B cell (primary cell): ENCODE measurements at regions of chr12 and their contacts with region 1.

Region 1: GRCh38 chr12:116186482-116187150 is 90.9 kb downstream of the MED13L start:
- DNase-seq: no peak
- ATAC-seq: no peak
- H3K4me3 ChIP-seq: no peak overlapping the region
- H3K4me3 Mint-ChIP-seq: no peak overlapping the region
- H3K27ac ChIP-seq: no peak overlapping the region
- H3K27ac Mint-ChIP-seq: no peak overlapping the region
- H3K4me1 ChIP-seq: peaks cover 20 to 35% of the 10 kb centered on the region in 2 donors
- H3K4me1 Mint-ChIP-seq: peaks cover 64% of the 10 kb centered on the region
- H3K27me3 ChIP-seq: no peaks in the 10 kb centered on the region
- H3K27me3 Mint-ChIP-seq: no peaks in the 10 kb centered on the region
- CTCF ChIP-seq: no peak

Region 2: DNA sequence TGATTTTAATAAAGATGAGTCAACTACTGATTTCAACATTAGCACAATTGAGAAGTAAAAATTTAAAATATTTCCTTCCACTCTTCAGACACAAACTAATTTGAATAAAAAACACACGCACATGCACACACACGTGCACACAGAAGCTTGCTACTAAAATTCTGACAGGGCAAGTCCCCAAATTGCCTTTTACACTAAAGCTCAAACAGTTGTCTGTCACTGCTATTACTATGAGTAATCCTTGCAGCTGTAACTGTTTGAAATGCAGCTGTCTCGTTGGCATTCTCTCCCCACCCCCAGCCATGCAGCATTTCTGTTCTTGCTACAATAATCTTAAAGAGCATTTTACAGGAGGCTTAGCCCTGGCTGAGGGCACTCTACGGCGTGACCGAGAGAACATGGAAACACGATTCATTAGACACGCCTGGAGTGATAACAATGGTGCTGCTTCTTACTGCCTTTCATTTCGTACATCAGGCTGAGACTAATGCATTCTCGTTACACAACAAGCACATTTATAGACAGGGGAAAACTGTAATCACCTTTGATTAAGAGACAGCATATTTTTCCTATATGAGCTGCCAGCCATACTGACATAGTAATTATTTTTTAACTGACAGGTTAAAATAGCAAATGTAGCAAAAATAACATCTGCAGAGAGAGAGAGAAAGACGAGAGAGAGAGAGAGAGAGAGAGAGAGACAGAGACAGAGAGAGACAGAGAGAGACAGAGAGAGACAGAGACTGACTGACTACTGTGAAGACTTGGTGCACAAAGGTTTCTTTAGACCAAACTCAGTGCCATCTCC is 63.0 kb before region 1 on chr12:
- CTCF ChIA-PET with region 1: no interaction called
- POLR2A ChIA-PET with region 1: no interaction called
- intact Hi-C with region 1: loop called (anchors 5 kb)
- DNase-seq: peak; percentile 39
- ATAC-seq: peak; percentile 66
- H3K4me3 ChIP-seq: no peak overlapping the region
- H3K4me3 Mint-ChIP-seq: peak overlapping the region; percentile 60
- H3K27ac ChIP-seq: no peak overlapping the region
- H3K27ac Mint-ChIP-seq: peak overlapping the region; percentile 3
- H3K4me1 ChIP-seq: peaks cover 12 to 17% of the 10 kb centered on the region in 2 donors
- H3K4me1 Mint-ChIP-seq: peaks cover 65% of the 10 kb centered on the region
- H3K27me3 ChIP-seq: no peaks in the 10 kb centered on the region
- H3K27me3 Mint-ChIP-seq: no peaks in the 10 kb centered on the region
- CTCF ChIP-seq: no peak

Region 3: DNA sequence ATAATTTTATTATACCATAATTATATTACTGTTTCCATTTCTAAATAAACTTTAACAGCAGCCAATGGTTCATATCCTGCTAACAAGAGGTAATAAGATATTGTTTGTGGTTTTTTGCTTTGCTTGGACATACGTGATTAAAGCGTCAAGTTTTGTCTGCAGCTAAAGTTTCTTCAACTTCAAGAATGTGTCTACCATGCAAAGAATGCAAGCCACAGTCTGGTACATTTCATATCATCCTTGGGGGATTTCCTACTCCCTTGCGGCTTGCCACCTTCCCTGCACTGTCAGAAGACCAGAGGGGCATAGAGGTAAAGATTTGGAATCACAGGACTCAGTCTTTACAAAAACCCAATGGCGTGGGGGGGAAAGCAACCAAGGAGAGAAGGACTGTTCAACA is 34.3 kb before region 1 on chr12:
- CTCF ChIA-PET with region 1: no interaction called
- POLR2A ChIA-PET with region 1: no interaction called
- intact Hi-C with region 1: loop called (anchors 5 kb)
- DNase-seq: peak; percentile 25
- ATAC-seq: no peak
- H3K4me3 ChIP-seq: no peak overlapping the region
- H3K4me3 Mint-ChIP-seq: no peak overlapping the region
- H3K27ac ChIP-seq: no peak overlapping the region
- H3K27ac Mint-ChIP-seq: no peak overlapping the region
- H3K4me1 ChIP-seq: peaks cover 17 to 18% of the 10 kb centered on the region in 2 donors
- H3K4me1 Mint-ChIP-seq: peaks cover 54% of the 10 kb centered on the region
- H3K27me3 ChIP-seq: no peaks in the 10 kb centered on the region
- H3K27me3 Mint-ChIP-seq: no peaks in the 10 kb centered on the region
- CTCF ChIP-seq: no peak

Region 4: DNA sequence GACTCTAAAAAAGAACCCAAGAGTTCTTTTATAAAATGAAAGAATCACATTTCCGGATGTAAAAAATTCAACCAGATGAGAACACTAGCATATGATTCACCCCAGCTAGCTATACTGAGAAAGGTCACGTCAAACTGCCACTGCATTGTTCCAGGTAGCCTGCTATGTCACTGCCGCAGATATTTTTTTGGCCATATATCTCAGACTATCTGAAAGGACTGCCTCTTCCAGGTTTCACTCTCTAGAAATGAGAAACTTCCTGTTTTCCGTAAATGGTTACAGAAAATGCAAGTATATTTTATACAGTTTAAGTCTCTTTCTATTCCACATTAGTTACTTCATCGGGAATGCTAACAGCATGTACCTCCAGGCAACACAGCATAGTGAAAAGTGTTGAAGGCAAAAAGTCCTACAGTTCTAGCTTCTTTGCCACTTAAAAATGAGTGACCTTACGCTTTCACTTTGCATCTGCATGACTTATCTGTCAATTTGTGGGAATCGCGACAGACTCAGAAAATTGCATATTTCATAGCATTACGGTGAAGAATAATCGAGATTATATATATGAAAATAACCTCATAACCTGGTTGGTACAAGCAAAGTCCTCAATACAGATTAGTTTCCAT is 14.3 kb before region 1 on chr12:
- CTCF ChIA-PET with region 1: no interaction called
- POLR2A ChIA-PET with region 1: no interaction called
- intact Hi-C with region 1: loop called (anchors 2 kb)
- DNase-seq: peak; percentile 48
- ATAC-seq: peak; percentile 87
- H3K4me3 ChIP-seq: peak overlapping the region in 4 of 5 experiments; percentile 21 to 43 (median 32)
- H3K4me3 Mint-ChIP-seq: peak overlapping the region; percentile 80
- H3K27ac ChIP-seq: peak overlapping the region in 1 of 2 donors; percentile 40
- H3K27ac Mint-ChIP-seq: peak overlapping the region; percentile 47
- H3K4me1 ChIP-seq: peaks cover 17 to 23% of the 10 kb centered on the region in 2 donors
- H3K4me1 Mint-ChIP-seq: peaks cover 73% of the 10 kb centered on the region
- H3K27me3 ChIP-seq: no peaks in the 10 kb centered on the region
- H3K27me3 Mint-ChIP-seq: no peaks in the 10 kb centered on the region
- CTCF ChIP-seq: no peak

Region 5: DNA sequence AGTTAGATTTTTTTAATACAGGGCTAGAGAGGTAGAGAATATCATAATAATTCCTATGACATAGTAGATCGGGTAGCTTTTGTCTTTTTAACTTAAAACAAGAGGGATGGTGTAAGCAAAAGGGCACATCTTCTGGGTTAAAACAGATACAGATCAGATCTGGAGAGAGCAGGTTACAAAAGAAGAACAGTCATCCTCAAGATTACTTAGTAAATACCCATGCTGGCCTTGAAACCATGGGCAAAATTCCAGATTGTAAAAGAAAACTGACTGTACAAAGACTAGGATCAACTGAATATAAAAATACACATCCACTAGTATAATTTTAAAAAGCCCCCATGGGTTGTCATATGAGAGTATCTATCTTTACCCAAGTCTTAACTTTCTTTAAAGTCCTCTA is 14.2 kb after region 1 on chr12:
- CTCF ChIA-PET with region 1: no interaction called
- POLR2A ChIA-PET with region 1: no interaction called
- intact Hi-C with region 1: loop called (anchors 2 kb)
- DNase-seq: no peak
- ATAC-seq: no peak
- H3K4me3 ChIP-seq: no peak overlapping the region
- H3K4me3 Mint-ChIP-seq: no peak overlapping the region
- H3K27ac ChIP-seq: no peak overlapping the region
- H3K27ac Mint-ChIP-seq: no peak overlapping the region
- H3K4me1 ChIP-seq: peaks cover 13 to 26% of the 10 kb centered on the region in 2 donors
- H3K4me1 Mint-ChIP-seq: peaks cover 61% of the 10 kb centered on the region
- H3K27me3 ChIP-seq: no peaks in the 10 kb centered on the region
- H3K27me3 Mint-ChIP-seq: no peaks in the 10 kb centered on the region
- CTCF ChIP-seq: no peak